CD8-positive, alpha-beta T cell (primary cell): ENCODE measurements at regions of chr20 and their contacts with region 1.

Region 1: DNA sequence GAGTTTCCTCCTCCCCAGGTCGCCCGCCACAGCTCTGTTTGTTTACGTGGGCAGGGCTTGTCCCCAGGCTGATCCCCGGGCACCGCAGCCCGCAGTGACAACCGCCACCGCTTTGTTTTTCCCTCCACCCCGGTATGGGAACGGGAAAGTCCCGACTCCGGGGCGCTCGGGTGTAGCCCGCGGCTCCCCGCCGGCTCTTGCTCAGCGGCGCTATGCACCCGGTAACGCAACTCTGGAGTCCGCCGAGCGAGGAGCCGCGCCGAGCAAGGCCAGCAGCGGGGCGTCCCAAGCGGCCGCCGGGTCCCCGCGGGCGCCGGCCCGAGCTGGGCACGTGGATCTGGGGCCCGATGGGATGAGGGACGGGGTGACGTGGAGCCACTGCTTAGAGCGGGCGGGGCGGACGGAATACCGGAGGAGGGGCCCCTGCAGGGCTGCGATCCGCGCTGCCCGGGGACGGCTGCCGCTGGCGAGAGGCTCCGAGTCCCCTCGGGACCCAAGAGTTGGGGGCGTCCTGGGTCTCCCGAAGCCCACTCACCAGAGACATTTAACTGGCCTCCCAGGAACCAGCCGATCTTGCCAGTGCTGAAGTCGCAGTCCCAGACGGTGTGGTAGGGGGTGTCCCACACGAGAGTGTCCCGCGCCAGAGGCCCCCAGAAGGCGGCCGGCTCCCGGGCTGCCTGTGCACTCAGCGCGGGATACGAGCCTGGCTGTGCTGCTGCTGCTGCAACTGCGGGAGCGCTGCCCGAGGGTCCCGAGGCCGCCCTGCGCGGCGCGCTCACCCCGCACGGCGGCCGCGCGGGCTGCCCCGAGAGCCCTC is 497 bp downstream of the ACSS1 start:
- DNase-seq: peak; percentile 62 to 94 (median 81)
- ATAC-seq: peak; percentile 33
- H3K4me3 ChIP-seq: peak overlapping the region; percentile 62 to 90
- H3K4me3 Mint-ChIP-seq: peak overlapping the region; percentile 87
- H3K27ac ChIP-seq: peak overlapping the region; percentile 71 to 83
- H3K27ac Mint-ChIP-seq: peak overlapping the region; percentile 95
- H3K4me1 ChIP-seq: peaks cover 52% of the 10 kb centered on the region
- H3K4me1 Mint-ChIP-seq: peaks cover 52% of the 10 kb centered on the region
- H3K27me3 ChIP-seq: no peaks in the 10 kb centered on the region
- H3K27me3 Mint-ChIP-seq: no peaks in the 10 kb centered on the region
- CTCF ChIP-seq: no peak

Region 2: DNA sequence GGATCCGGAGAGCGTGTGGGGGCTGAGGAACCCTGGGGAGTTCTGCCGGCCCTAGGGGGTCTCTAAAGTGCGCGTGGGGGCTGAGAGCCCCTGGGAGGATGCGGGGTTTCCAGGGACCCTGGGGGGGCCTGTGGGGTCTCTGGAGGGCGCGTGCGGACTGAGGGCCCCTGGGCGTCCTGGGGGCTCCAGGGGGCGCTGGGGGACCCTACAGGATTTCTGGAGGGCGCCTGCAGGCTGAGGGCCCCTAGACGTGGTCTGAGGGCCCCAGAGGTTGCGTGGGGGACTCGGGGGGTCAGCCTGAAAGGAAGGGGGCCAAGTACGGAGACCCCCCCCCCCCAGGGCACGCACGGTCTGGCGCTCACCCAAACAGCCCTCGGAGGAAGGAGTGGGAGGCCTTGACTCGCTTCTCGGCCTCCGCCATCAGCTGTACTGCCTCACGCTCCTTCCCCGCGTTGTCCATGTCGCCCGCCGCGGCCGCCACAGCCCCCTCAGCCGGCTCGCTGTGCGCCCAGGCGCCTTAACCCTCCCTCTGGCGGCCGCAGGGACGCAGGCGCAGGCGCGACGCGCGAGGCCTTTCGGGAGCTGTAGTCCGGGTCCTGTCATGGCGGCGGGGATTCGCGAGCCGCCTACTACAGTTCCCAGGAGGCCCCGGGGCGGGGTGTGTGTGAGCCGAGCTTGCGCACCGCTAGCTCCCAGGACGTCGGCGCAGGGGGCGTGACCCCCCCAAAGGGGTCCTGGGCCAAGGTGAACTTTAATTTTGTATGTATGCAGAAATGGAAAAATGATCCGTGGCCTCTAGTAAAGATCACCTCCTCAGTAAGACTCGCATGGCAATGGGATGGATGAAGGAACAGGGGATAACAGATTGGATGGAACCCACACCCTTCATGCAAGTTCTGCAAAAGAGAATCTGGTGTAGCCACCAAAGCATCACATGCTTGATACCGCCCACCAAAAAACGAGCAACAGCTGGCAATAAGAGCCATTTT is 1636.2 kb before region 1 on chr20 and contains the start of gene NAPB:
- CTCF ChIA-PET with region 1: no interaction called
- POLR2A ChIA-PET with region 1: no interaction called
- intact Hi-C with region 1: loop called in 1 of 2 experiments (anchors 5 kb)
- DNase-seq: peak; percentile 85 to 95 (median 93)
- ATAC-seq: peak; percentile 98
- H3K4me3 ChIP-seq: peak within 1 kb of the TSS; percentile 85 to 96
- H3K4me3 Mint-ChIP-seq: peak within 1 kb of the TSS; percentile 87
- H3K27ac ChIP-seq: peak within 1 kb of the TSS; percentile 71 to 76
- H3K27ac Mint-ChIP-seq: peak within 1 kb of the TSS; percentile 89
- H3K4me1 ChIP-seq: peaks cover 23% of the 10 kb centered on the region
- H3K4me1 Mint-ChIP-seq: peaks cover 67% of the 10 kb centered on the region
- H3K27me3 ChIP-seq: peaks cover 0 to 4% of the 10 kb centered on the region in 2 experiments
- H3K27me3 Mint-ChIP-seq: no peaks in the 10 kb centered on the region
- CTCF ChIP-seq: peak; percentile 21
- total RNA-seq, gene NAPB: 10.9 to 11.7 TPM

Region 3: GRCh38 chr20:24948939-24949679 is 108.3 kb before region 1 on chr20 and contains the start of gene CST7:
- CTCF ChIA-PET with region 1: no interaction called
- POLR2A ChIA-PET with region 1: no interaction called
- intact Hi-C with region 1: loop called (anchors 1 kb)
- DNase-seq: peak; percentile 76 to 96 (median 87)
- ATAC-seq: peak; percentile 90
- H3K4me3 ChIP-seq: peak within 1 kb of the TSS; percentile 55 to 90
- H3K4me3 Mint-ChIP-seq: peak within 1 kb of the TSS; percentile 86
- H3K27ac ChIP-seq: peak within 1 kb of the TSS; percentile 73 to 95
- H3K27ac Mint-ChIP-seq: peak within 1 kb of the TSS; percentile 93
- H3K4me1 ChIP-seq: peaks cover 23% of the 10 kb centered on the region
- H3K4me1 Mint-ChIP-seq: peaks cover 63% of the 10 kb centered on the region
- H3K27me3 ChIP-seq: no peaks in the 10 kb centered on the region
- H3K27me3 Mint-ChIP-seq: no peaks in the 10 kb centered on the region
- CTCF ChIP-seq: no peak
- total RNA-seq, gene CST7: 53.3 to 54.6 TPM

Region 4: GRCh38 chr20:25090492-25091429 is 33.3 kb after region 1 on chr20:
- CTCF ChIA-PET with region 1: interaction called, 4 read pairs
- POLR2A ChIA-PET with region 1: interaction called, 24 read pairs
- intact Hi-C with region 1: loop called in 1 of 2 experiments (anchors 1 kb)
- DNase-seq: peak; percentile 30 to 93 (median 77)
- ATAC-seq: peak; percentile 97
- H3K4me3 ChIP-seq: peak overlapping the region in 1 of 2 experiments; percentile 1
- H3K4me3 Mint-ChIP-seq: peak overlapping the region; percentile 53
- H3K27ac ChIP-seq: peak overlapping the region in 1 of 2 experiments; percentile 44
- H3K27ac Mint-ChIP-seq: peak overlapping the region; percentile 84
- H3K4me1 ChIP-seq: peaks cover 29% of the 10 kb centered on the region
- H3K4me1 Mint-ChIP-seq: peaks cover 34% of the 10 kb centered on the region
- H3K27me3 ChIP-seq: no peaks in the 10 kb centered on the region
- H3K27me3 Mint-ChIP-seq: peaks cover 6% of the 10 kb centered on the region
- CTCF ChIP-seq: no peak

Region 5: DNA sequence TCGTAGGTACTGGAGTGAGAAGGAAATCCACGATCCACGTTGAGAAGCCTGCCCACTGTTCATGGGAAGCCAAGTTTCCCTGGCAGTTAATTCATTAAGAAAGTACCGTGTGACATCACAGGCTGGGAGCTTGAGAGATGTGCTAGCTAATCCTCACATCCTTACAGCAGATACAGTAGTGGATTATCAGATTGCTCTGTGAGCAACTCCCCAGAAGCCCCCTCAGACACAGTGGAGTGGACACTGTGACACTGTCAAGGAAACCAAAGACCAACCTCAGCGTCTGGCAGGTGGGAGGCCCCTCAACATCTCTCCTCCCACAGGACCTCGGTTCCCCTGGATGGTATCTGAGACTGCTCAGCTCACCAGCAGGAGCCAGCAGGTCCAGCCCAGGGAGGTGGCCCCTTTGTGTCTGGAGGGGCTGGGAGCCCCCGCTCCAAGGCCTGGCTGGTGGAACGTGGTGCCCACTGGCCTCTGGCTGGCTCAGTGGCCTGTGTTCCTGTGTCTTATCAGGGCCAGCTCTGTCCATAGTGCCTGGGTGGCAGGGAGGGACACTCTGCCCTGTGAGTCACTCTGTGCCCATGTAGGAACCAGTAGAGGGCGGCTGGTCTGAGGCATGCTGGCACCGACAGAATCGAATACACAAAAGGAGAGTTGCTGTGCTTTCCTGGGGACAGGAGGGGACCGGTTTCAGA is 197.7 kb after region 1 on chr20:
- CTCF ChIA-PET with region 1: interaction called, 3 read pairs
- POLR2A ChIA-PET with region 1: no interaction called
- intact Hi-C with region 1: loop called (anchors 2 kb)
- DNase-seq: peak in 1 of 9 experiments; percentile 39
- ATAC-seq: no peak
- H3K4me3 ChIP-seq: no peak overlapping the region
- H3K4me3 Mint-ChIP-seq: no peak overlapping the region
- H3K27ac ChIP-seq: no peak overlapping the region
- H3K27ac Mint-ChIP-seq: peak overlapping the region; percentile 62
- H3K4me1 ChIP-seq: peaks cover 31% of the 10 kb centered on the region
- H3K4me1 Mint-ChIP-seq: peaks cover 78% of the 10 kb centered on the region
- H3K27me3 ChIP-seq: no peaks in the 10 kb centered on the region
- H3K27me3 Mint-ChIP-seq: no peaks in the 10 kb centered on the region
- CTCF ChIP-seq: no peak

Region 6: DNA sequence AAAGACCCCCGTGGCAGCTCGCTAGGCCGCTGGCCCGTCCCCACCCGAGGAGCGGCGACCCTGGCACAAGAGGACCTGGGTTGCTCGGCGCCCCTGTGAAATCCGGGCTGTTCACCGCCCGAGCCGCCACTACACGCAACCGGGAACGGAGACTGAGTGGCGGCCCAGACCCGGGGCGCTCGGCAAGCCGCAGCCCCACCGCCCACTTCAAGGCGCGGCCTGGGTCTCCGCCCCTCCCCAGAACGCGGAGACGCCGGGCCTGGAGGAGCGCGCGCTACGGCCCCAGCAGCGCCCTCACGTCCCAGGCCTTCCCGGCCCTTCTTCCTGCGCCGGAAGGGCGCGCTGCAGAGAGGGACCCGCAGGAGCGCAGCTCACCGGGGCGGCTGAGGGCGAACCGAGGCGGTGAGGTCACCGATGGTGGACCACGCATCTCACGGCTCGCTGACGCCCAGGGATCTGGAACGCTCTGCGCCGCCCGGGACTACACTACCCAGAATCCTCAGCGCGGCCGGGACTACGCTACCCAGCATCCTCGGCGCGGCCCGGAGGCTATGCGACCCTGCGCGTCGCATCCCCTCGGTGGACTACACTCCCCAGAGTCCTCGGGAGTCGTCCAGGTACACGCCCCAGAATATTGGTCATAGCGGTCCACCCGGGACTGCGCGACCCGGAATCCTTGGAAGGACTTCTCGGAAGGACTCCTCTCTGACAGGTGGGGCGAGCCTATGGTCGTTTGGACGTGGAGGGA is 639.1 kb after region 1 on chr20 and contains the start of gene ZNF337:
- CTCF ChIA-PET with region 1: no interaction called
- POLR2A ChIA-PET with region 1: no interaction called
- intact Hi-C with region 1: loop called in 1 of 2 experiments (anchors 10 kb)
- DNase-seq: peak; percentile 85 to 95 (median 92)
- ATAC-seq: peak; percentile 98
- H3K4me3 ChIP-seq: peak within 1 kb of the TSS; percentile 62 to 78
- H3K4me3 Mint-ChIP-seq: peak within 1 kb of the TSS; percentile 95
- H3K27ac ChIP-seq: peak within 1 kb of the TSS; percentile 73 to 75
- H3K27ac Mint-ChIP-seq: peak within 1 kb of the TSS; percentile 93
- H3K4me1 ChIP-seq: peaks cover 8% of the 10 kb centered on the region
- H3K4me1 Mint-ChIP-seq: peaks cover 42% of the 10 kb centered on the region
- H3K27me3 ChIP-seq: no peaks in the 10 kb centered on the region
- H3K27me3 Mint-ChIP-seq: no peaks in the 10 kb centered on the region
- CTCF ChIP-seq: no peak
- total RNA-seq, gene ZNF337: 21.5 TPM